Lower leg skin (tissue), 4 donors: ENCODE measurements at regions of chr6 and their contacts with region 1.

Region 1: GRCh38 chr6:85678602-85679444 is 36.1 kb upstream of the SYNCRIP start:
- DNase-seq: peak; percentile 99 to 100
- H3K4me3 ChIP-seq: peak overlapping the region; percentile 90
- CTCF ChIP-seq: no peak
- POLR2A ChIP-seq: peak in 1 of 2 donors; percentile 99

Region 2: DNA sequence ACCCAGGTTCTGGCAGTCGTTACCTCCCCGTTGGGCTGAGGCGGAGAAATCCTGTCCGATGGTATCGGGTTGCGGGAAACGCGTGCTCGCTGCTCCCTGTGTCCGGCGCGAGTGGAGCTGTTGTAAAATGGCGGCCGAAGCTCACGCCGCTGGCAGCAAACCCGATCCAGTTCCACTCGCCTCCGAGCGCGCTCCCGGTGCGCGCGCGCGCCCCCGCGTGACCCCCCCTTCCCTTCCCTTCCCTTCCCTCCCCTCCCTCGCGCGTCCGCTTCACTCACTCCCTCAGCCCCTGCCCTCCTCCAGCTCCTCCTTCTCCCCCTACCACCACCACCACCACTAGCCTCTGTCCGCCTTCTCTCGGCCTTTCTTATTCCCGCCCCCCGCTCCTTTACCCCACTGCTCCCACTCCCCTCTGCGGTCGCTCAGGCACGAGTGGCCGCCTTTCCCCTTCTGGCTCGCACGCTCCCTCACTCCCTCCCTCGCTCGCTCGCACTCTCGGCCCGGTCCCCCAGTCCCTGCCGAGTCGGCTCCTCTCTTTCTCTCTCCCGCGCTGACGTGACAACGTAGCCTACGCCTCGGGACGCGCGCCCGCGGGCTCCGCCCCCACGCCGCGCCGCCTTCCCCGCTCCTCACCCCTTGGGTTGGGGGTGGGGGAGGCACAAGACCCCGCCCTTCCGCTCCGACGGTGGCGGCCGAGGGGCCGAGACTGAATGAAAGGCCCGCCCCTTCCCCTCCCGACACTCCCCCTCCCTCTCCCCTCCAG is 35.9 kb before region 1 on chr6 and contains the start of gene SYNCRIP:
- intact Hi-C with region 1: loop called (anchors 1 kb)
- DNase-seq: peak; percentile 97 to 100
- H3K4me3 ChIP-seq: peak within 1 kb of the TSS; percentile 95
- CTCF ChIP-seq: no peak
- POLR2A ChIP-seq: peak in 1 of 2 donors; percentile 95
- total RNA-seq, gene SYNCRIP: 49.4 to 56.3 (median 50.6) TPM

Region 3: DNA sequence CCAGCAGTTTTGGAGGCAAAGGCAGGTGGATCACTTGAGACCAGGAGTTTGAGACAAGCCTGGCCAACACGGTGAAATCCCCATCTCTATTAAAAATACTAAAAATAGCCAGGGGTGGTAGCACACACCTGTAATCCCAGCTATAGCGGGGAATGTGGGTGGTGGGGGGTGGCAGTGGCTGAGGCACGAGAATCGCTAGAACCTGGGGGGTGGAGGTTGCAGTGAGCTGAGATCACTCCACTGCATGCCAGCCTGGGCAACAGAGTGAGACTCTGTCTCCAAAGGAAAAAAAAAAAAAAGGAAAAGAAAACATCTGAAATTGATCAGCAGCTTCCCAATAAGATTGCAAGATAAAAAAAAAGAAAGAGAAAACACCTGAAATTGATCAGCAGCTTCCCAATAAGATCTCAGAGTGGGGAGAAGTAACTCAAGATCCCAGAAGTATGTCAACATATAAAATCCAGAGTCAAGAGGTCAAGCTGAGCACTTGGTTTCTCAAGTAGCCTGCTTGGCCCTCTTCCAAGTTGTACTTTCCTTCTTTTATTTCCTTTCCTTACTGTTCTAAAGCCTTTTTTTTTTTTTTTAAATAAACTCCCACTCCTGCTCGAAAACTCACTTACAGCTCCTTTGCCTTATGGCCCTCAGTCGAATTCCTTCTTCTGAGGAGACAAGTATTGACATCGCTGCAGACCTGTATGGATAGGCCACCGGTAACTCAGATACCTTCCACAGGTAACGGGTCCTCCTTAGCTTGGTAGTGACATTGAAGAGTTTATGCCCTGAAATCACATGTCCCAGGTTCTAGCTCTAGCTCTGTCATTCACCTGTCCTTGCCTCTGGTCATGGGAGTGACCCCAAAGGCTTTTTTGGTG is 332.3 kb after region 1 on chr6:
- intact Hi-C with region 1: no loop called
- DNase-seq: no peak
- H3K4me3 ChIP-seq: no peak overlapping the region
- CTCF ChIP-seq: no peak
- POLR2A ChIP-seq: no peak